A673 (cell line): ENCODE measurements at regions of chr7 and their contacts with region 1.

Region 1: GRCh38 chr7:98956937-98957336 is 78.6 kb downstream of the TRRAP start:
- DNase-seq: no peak
- H3K4me3 ChIP-seq: no peak overlapping the region
- H3K27ac ChIP-seq: no peak overlapping the region
- H3K4me1 ChIP-seq: no peaks in the 10 kb centered on the region
- H3K27me3 ChIP-seq: no peaks in the 10 kb centered on the region
- CTCF ChIP-seq: no peak

Region 2: GRCh38 chr7:98387544-98388224 is 569.3 kb before region 1 on chr7:
- CTCF ChIA-PET with region 1: no interaction called
- POLR2A ChIA-PET with region 1: no interaction called
- intact Hi-C with region 1: no loop called
- DNase-seq: no peak
- H3K4me3 ChIP-seq: no peak overlapping the region
- H3K27ac ChIP-seq: no peak overlapping the region
- H3K4me1 ChIP-seq: no peaks in the 10 kb centered on the region
- H3K27me3 ChIP-seq: no peaks in the 10 kb centered on the region
- CTCF ChIP-seq: no peak

Region 3: DNA sequence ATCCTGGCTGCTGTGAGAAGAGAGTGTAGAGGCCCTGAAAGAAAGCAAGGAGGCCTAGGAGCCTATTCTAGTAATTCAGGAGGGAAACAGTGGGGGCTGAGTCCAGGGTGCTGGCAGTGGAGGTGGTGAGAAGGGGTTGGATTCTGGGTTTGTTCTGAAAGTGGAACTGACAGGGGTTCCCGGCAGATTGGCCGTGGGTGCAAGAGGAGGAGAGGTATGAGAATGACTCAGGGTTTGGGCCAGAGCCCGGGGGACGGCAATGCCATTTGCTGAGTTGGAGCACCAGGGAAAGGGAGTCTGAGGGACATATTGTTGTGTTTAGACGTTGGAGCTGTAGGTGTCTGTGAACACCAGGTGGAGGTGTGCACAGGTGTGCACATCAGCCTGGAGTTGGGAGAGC is 301.3 kb before region 1 on chr7:
- CTCF ChIA-PET with region 1: no interaction called
- POLR2A ChIA-PET with region 1: no interaction called
- intact Hi-C with region 1: no loop called
- DNase-seq: no peak
- H3K4me3 ChIP-seq: no peak overlapping the region
- H3K27ac ChIP-seq: no peak overlapping the region
- H3K4me1 ChIP-seq: no peaks in the 10 kb centered on the region
- H3K27me3 ChIP-seq: peaks cover 9% of the 10 kb centered on the region
- CTCF ChIP-seq: no peak

Region 4: GRCh38 chr7:98907570-98907969 is 49.4 kb before region 1 on chr7:
- CTCF ChIA-PET with region 1: no interaction called
- POLR2A ChIA-PET with region 1: interaction called, 12 read pairs
- intact Hi-C with region 1: no loop called
- DNase-seq: no peak
- H3K4me3 ChIP-seq: no peak overlapping the region
- H3K27ac ChIP-seq: no peak overlapping the region
- H3K4me1 ChIP-seq: no peaks in the 10 kb centered on the region
- H3K27me3 ChIP-seq: no peaks in the 10 kb centered on the region
- CTCF ChIP-seq: no peak

Region 5: GRCh38 chr7:98993024-98993897 is 36.3 kb after region 1 on chr7:
- CTCF ChIA-PET with region 1: no interaction called
- POLR2A ChIA-PET with region 1: interaction called, 11 read pairs
- intact Hi-C with region 1: no loop called
- DNase-seq: no peak
- H3K4me3 ChIP-seq: no peak overlapping the region
- H3K27ac ChIP-seq: no peak overlapping the region
- H3K4me1 ChIP-seq: no peaks in the 10 kb centered on the region
- H3K27me3 ChIP-seq: no peaks in the 10 kb centered on the region
- CTCF ChIP-seq: peak; percentile 32; the same call in 1 of the 2 replicates

Region 6: GRCh38 chr7:99090771-99091542 is 134.0 kb after region 1 on chr7:
- CTCF ChIA-PET with region 1: no interaction called
- POLR2A ChIA-PET with region 1: no interaction called
- intact Hi-C with region 1: no loop called
- DNase-seq: no peak
- H3K4me3 ChIP-seq: no peak overlapping the region
- H3K27ac ChIP-seq: peak overlapping the region; percentile 1
- H3K4me1 ChIP-seq: no peaks in the 10 kb centered on the region
- H3K27me3 ChIP-seq: no peaks in the 10 kb centered on the region
- CTCF ChIP-seq: no peak

Region 7: DNA sequence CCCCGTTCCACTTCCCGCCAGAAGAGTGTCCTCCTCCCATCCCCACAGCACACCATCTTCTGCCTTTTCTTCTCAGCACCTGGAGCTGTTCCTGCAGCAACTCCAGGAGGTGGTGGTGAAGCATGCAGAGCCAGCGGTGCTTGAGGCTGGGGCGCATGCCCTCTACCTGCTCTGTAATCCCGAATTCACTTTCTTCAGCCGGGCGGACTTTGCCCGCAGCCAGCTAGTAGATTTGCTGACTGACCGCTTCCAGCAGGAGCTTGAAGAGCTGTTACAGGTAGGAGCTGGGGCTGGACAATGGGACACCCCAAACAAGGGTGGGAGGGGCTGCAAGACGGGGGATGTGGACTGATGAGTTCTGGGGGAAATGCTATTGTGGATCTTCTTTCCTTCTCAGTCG is 1243.8 kb after region 1 on chr7:
- CTCF ChIA-PET with region 1: no interaction called
- POLR2A ChIA-PET with region 1: no interaction called
- intact Hi-C with region 1: no loop called
- DNase-seq: no peak
- H3K4me3 ChIP-seq: no peak overlapping the region
- H3K27ac ChIP-seq: no peak overlapping the region
- H3K4me1 ChIP-seq: no peaks in the 10 kb centered on the region
- H3K27me3 ChIP-seq: peaks cover 6% of the 10 kb centered on the region
- CTCF ChIP-seq: no peak